ENCODE measurements at regions of chr10 and their contacts with region 1.

Region 1: DNA sequence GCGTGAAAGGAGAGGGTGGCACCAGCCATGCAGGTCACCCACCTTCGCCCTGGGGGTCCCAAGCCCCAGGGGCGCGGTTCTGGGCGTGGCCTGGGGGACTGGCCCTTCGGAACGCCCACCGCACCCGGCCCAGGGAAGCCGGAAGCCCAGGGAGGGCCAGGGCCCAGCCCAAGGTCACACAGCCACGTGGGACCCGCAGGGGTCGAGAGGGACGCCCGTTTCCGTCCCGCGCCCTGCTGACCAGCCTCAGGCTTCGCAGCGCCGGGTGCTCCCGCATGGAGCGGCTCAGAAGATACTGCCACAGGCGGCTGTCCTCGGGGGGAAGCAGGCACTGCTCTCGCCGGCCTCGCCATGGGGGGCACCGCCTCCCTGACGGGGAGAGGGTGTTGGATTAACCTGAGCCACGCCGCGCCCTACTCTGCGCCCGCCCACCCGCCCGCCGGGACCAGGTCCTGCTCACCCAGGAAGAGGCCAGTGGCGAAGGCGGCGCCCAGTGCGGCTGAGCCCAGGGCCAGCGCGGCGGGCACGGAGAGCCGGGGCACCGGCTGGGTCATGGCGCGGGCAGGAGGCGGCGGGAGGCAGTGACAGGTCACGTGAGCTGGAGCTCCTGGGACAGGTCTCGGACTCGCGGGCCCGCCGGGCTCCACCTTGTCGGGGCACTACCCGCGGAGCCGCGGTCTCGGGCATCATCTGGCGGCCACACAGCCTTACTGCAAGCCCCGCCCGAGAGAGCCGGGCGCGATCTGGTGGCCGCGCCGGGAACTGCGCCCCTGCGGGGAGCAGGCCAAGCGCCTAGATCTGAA is at the start of gene COMTD1:
- DNase-seq: peak; percentile 98
- ATAC-seq: peak; percentile 76
- H3K4me3 Mint-ChIP-seq: peak within 1 kb of the TSS; percentile 79
- H3K27ac Mint-ChIP-seq: peak within 1 kb of the TSS; percentile 89
- H3K4me1 Mint-ChIP-seq: peaks cover 31% of the 10 kb centered on the region
- H3K27me3 Mint-ChIP-seq: no peaks in the 10 kb centered on the region
- total RNA-seq, gene COMTD1: 28.1 to 41.0 TPM

Region 2: GRCh38 chr10:73874267-73875138 is 1361.1 kb before region 1 on chr10 and contains the start of gene CAMK2G:
- CTCF ChIA-PET with region 1: interaction called, 3 read pairs
- POLR2A ChIA-PET with region 1: no interaction called
- intact Hi-C with region 1: loop called in 1 of 2 experiments (anchors 1 kb)
- DNase-seq: peak; percentile 92
- ATAC-seq: peak; percentile 87
- H3K4me3 Mint-ChIP-seq: peak within 1 kb of the TSS; percentile 74
- H3K27ac Mint-ChIP-seq: peak within 1 kb of the TSS; percentile 81
- H3K4me1 Mint-ChIP-seq: peaks cover 67% of the 10 kb centered on the region
- H3K27me3 Mint-ChIP-seq: no peaks in the 10 kb centered on the region
- total RNA-seq, gene CAMK2G: 16.4 to 19.4 TPM

Region 3: DNA sequence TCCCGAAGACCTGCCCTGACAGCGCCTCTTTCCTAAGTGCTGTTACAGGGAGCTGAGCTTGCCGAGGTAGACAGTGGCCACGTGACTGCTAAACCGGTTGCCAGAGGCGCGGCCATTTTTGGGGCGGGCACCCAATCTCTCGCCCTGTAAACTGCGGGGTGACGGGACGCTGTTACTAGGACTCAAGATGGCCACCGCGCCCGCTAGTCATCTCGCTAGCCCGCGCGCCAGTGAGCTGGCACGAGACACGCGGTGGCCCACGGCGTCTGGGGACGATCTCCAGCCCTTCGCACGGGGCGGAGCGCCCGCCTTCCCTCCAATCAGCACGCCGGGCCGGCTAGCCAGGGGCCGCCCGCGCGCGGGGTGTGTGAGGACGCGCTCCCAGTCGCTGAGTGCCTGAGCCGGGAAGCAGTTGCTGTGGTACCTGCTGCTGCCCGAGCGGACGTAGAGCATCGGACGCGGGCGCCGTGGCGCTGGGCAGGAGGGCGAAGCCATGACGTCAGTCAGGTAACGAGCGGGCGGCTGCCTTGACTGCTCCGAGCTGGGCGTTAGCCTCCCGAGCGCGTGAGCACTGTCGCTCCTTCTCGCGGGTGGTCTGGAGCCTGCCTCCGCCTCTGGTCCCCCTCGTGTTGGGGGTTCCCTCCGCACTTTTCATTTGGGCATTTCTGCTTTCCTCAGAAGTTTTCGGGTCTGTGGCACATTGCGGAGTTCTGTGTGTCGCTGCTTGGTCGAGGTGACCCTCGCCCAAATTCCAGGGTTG is 1059.0 kb before region 1 on chr10:
- CTCF ChIA-PET with region 1: no interaction called
- POLR2A ChIA-PET with region 1: no interaction called
- intact Hi-C with region 1: loop called in 1 of 2 experiments (anchors 1 kb)
- DNase-seq: peak; percentile 98
- ATAC-seq: peak; percentile 94
- H3K4me3 Mint-ChIP-seq: peak overlapping the region; percentile 89
- H3K27ac Mint-ChIP-seq: peak overlapping the region; percentile 95
- H3K4me1 Mint-ChIP-seq: peaks cover 37% of the 10 kb centered on the region
- H3K27me3 Mint-ChIP-seq: no peaks in the 10 kb centered on the region

Region 4: DNA sequence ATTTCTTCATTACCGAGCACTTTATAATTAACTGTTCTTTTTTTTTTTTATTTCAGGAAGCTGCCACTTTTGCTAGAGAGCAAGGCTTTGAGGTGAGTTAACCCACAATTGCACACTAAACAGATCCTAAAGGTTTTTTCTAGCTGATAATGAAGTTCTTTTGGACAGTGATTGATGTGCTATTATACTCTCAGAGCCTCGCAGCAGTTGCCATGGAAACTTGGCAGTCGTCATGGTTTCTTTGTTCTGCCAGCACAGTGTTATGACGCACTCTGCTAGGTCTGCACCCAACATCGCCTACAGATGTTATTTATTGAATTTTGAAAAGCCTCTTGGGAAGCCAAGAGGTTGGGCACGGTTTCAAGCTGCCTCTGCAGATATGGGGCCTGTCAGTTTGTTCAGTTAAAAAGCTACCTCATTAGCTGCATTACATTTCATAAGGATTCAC is 646.3 kb before region 1 on chr10:
- CTCF ChIA-PET with region 1: interaction called, 3 read pairs
- POLR2A ChIA-PET with region 1: no interaction called
- intact Hi-C with region 1: loop called (anchors 1 to 10 kb)
- DNase-seq: peak; percentile 93
- ATAC-seq: peak; percentile 54
- H3K4me3 Mint-ChIP-seq: no peak overlapping the region
- H3K27ac Mint-ChIP-seq: peak overlapping the region; percentile 85
- H3K4me1 Mint-ChIP-seq: peaks cover 69% of the 10 kb centered on the region
- H3K27me3 Mint-ChIP-seq: no peaks in the 10 kb centered on the region

Region 5: DNA sequence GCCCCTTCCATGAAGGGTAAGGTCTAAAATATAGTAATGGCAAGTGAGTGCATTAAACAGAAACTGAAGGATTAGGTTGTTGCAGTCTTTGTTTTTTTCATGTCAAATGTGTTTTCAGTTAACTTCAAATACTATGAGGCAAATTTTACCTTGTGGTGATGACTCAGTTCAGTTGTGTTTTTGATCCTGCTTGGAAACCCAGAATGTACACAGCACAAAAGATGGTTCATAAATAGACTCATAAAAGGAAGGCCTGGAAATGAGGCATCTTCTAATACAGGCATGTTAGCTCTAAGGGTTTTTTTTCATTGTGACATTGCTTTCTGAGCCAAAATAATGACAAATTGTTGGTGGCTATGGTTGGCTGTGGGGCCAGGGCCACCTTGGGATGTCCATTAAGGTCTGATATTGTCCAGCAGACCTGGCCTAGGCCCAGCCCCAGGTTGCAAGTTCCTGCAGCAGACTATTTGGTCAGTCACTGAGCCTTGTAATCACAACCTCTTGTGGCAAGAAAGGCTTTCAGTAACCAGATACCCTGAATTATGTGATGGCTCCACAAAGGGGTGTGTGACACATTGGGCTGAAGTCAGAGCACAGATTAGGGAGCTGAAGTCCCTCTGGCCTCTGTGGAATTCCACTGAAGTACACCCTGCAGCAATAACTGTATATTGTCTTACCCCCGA is 193.1 kb before region 1 on chr10:
- CTCF ChIA-PET with region 1: interaction called, 3 read pairs
- POLR2A ChIA-PET with region 1: no interaction called
- intact Hi-C with region 1: loop called (anchors 2 to 10 kb)
- DNase-seq: peak; percentile 28
- ATAC-seq: peak; percentile 82
- H3K4me3 Mint-ChIP-seq: no peak overlapping the region
- H3K27ac Mint-ChIP-seq: peak overlapping the region; percentile 80
- H3K4me1 Mint-ChIP-seq: peaks cover 57% of the 10 kb centered on the region
- H3K27me3 Mint-ChIP-seq: peaks cover 5% of the 10 kb centered on the region

Region 6: DNA sequence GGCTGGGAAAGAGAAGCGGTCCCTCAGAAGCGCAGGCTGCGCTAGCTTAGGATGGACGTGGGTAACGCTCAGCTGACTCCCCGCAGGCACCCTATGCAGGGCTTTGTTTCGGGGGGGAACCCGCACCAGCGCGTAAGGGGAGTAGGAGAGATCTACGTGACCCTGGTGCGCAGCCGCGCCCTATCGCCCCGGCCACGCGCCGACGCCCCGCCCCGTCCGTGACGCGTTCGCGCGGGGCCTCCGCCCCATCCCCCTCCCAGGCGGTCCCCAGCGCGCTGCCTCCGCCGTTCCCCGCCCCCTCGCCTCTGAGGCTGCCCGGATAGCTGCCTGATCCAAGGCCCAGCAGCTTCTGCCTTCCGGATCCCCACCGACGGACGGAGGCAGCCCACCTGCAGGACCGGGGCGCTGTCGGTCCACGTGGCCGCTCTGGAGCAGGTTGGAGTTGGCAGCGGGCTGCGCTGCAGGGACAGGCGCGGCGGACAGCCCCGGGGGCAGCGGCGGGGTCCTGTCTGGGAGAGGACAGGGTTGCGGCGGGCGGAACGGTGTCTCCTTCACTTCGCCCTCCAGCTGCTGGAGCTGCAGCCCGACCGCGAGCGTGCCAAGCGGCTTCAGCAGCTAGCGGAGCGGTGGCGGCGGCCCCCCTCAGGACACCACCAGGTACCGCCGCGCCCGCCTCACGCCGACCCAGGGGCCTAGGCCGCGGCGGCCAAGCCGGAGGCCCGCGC is 25.1 kb before region 1 on chr10 and contains the start of gene VDAC2:
- CTCF ChIA-PET with region 1: interaction called, 129 read pairs
- POLR2A ChIA-PET with region 1: interaction called, 28 read pairs
- intact Hi-C with region 1: loop called (anchors 1 kb)
- DNase-seq: peak; percentile 96
- ATAC-seq: peak; percentile 83
- H3K4me3 Mint-ChIP-seq: peak within 1 kb of the TSS; percentile 89
- H3K27ac Mint-ChIP-seq: peak within 1 kb of the TSS; percentile 100
- H3K4me1 Mint-ChIP-seq: peaks cover 40% of the 10 kb centered on the region
- H3K27me3 Mint-ChIP-seq: no peaks in the 10 kb centered on the region
- total RNA-seq, gene VDAC2: 122 to 233 TPM